ENCODE measurements at regions of chrX and their contacts with region 1.

Region 1: DNA sequence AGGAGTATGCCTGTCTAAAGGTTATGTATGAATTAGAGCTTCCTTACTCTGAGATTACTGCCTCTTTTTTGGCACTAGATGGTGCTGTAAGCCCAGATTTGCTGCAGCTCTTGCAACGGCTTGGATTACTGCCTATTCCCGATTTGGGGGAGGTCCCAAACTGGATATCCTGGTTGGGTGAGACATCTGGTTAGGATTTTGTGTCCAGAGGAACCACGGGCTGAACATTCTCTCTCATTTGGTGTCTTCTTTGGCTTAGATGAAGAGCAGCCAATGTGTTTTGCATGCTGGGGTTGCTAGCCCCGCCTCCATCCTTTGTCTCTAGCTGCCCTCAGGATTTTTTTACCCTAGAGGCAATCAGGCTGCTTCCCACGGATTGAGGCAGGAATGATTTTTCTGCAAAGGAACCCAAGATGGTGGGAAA is 31.9 kb downstream of the F8A1 start:
- DNase-seq: peak; percentile 52
- H3K4me3 ChIP-seq: no peak overlapping the region
- H3K27ac ChIP-seq: no peak overlapping the region
- H3K4me1 ChIP-seq: no peaks in the 10 kb centered on the region
- H3K27me3 ChIP-seq: no peaks in the 10 kb centered on the region
- CTCF ChIP-seq: peak; percentile 59 to 69

Region 2: DNA sequence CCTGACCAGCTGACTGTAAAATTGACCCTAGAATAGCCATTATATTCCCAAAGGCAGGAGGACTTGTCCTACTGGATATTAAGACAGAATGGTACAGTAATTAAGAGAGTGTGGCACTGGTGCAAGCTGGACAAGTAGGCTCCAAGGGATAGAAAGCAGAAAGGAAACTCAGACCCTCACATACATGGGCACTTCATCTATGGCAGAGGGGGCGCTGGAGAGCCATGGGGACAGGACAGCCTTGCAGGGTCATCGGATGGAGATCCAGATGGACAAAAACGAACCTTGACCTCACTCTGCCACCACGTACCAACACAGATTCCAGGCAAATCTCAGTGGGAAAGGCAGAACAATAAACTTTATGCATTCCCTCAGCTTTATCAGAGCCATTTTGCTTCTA is 207.8 kb before region 1 on chrX:
- CTCF ChIA-PET with region 1: no interaction called
- dilution Hi-C with region 1: no loop called
- in situ Hi-C with region 1: no loop called
- intact Hi-C with region 1: no loop called
- DNase-seq: no peak
- H3K4me3 ChIP-seq: no peak overlapping the region
- H3K27ac ChIP-seq: no peak overlapping the region
- H3K4me1 ChIP-seq: peaks cover 17% of the 10 kb centered on the region
- H3K27me3 ChIP-seq: no peaks in the 10 kb centered on the region
- CTCF ChIP-seq: no peak

Region 3: GRCh38 chrX:155056877-155057792 is 139.1 kb after region 1 on chrX:
- CTCF ChIA-PET with region 1: interaction called, 3 read pairs
- dilution Hi-C with region 1: no loop called
- in situ Hi-C with region 1: no loop called
- intact Hi-C with region 1: loop called (anchors 2 kb)
- DNase-seq: peak; percentile 53
- H3K4me3 ChIP-seq: peak overlapping the region in 1 of 3 experiments; percentile 13
- H3K27ac ChIP-seq: no peak overlapping the region
- H3K4me1 ChIP-seq: no peaks in the 10 kb centered on the region
- H3K27me3 ChIP-seq: no peaks in the 10 kb centered on the region
- CTCF ChIP-seq: peak; percentile 52 to 68

Region 4: DNA sequence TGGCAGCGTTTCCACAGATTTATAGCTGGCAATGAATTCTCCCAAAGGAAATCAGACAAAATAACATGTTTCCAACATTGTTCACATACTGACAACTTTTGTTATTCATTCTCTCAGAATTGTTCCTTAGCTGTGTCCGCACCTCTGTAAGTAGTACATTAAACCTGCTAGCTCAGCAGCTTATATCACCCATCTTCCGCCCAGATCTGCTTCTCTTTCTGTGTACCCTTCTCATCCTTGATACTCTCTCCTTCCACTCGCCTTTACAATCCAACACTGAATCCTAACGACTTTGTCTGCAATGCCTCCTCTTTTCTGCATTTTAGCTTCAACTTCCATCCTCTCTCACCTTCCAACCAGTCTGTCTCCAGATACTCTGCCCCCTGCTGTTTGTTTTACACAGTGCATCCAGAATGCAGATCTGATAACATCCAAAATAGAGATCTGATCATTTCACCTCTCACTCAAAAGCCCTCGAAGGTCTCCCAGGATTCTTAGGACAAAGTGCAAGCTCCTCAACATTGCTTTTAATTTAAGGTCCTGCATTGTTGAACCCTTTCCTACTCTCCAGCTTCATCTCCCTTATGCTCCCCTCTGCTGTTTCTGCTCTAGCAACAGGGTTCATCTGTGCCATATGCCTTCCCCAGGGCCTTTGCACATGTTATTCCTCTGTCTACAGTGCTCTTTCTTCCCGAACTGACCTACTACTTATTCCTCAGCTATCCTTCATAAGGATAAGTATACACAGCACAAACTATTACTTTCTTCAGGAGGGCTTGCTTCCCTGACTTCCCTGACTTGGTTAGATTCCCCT is 230.9 kb after region 1 on chrX:
- CTCF ChIA-PET with region 1: interaction called, 4 read pairs
- dilution Hi-C with region 1: no loop called
- in situ Hi-C with region 1: no loop called
- intact Hi-C with region 1: loop called (anchors 1 kb)
- DNase-seq: peak; percentile 12
- H3K4me3 ChIP-seq: no peak overlapping the region
- H3K27ac ChIP-seq: no peak overlapping the region
- H3K4me1 ChIP-seq: no peaks in the 10 kb centered on the region
- H3K27me3 ChIP-seq: no peaks in the 10 kb centered on the region
- CTCF ChIP-seq: peak; percentile 30 to 60

Region 5: GRCh38 chrX:155179346-155179986 is 261.4 kb after region 1 on chrX:
- CTCF ChIA-PET with region 1: no interaction called
- dilution Hi-C with region 1: no loop called
- in situ Hi-C with region 1: no loop called
- intact Hi-C with region 1: loop called (anchors 1 kb)
- DNase-seq: peak; percentile 4
- H3K4me3 ChIP-seq: no peak overlapping the region
- H3K27ac ChIP-seq: no peak overlapping the region
- H3K4me1 ChIP-seq: no peaks in the 10 kb centered on the region
- H3K27me3 ChIP-seq: no peaks in the 10 kb centered on the region
- CTCF ChIP-seq: peak; percentile 23 to 47

Region 6: DNA sequence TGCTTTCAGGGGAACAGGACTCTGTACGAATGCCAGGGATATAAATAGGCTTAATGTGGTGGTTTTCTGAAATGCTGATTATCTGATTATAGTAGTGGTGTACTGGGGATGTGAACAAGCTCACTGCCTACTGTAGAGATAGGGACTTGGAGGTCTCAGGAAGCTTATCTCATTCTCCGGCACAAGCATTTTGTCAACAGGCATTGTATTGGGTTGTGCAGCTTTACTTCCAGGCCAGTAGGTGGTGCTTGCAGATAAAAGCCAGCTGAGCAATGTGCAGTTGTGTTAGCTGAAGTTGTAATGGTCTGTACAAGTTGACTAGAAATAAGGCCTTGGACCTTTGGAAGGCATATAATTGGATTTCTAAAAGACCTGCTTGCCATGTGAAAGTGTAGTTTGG is 744.2 kb after region 1 on chrX:
- CTCF ChIA-PET with region 1: no interaction called
- dilution Hi-C with region 1: no loop called
- in situ Hi-C with region 1: no loop called
- intact Hi-C with region 1: loop called (anchors 10 kb)
- DNase-seq: no peak
- H3K4me3 ChIP-seq: no peak overlapping the region
- H3K27ac ChIP-seq: no peak overlapping the region
- H3K4me1 ChIP-seq: no peaks in the 10 kb centered on the region
- H3K27me3 ChIP-seq: no peaks in the 10 kb centered on the region
- CTCF ChIP-seq: peak; percentile 17 to 55

Region 7: DNA sequence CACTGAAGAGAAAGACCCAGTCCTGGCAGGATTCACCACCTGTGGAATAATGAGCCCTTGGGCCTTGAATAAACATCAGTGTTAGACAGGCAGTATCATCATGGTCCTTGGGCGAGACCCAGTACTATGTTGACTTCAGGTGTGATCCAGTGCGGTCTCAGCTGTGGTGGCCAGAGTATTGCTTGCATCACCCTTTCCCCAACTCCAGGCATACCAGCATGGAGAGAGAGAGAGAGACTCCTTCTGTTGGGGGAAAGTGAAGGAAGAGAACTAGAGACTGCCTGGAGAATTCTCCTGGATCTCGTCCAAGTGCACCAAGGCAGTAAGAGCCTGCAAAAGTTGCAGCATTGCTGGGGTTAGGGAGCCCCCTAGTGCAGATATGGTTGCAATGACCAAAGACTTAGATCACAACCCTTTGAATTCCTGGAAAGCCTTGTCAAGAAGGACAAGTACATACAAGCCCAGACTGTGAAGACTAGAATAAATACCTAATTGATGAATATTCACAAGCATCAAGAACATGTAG is 902.0 kb after region 1 on chrX:
- CTCF ChIA-PET with region 1: no interaction called
- dilution Hi-C with region 1: no loop called
- in situ Hi-C with region 1: no loop called
- intact Hi-C with region 1: loop called (anchors 1 kb)
- DNase-seq: peak; percentile 88
- H3K4me3 ChIP-seq: no peak overlapping the region
- H3K27ac ChIP-seq: no peak overlapping the region
- H3K4me1 ChIP-seq: peaks cover 9% of the 10 kb centered on the region
- H3K27me3 ChIP-seq: no peaks in the 10 kb centered on the region
- CTCF ChIP-seq: peak; percentile 49 to 68

Measured in mammary epithelial cell (primary cell).